ENCODE measurements at regions of chr2 and their contacts with region 1.

Region 1: DNA sequence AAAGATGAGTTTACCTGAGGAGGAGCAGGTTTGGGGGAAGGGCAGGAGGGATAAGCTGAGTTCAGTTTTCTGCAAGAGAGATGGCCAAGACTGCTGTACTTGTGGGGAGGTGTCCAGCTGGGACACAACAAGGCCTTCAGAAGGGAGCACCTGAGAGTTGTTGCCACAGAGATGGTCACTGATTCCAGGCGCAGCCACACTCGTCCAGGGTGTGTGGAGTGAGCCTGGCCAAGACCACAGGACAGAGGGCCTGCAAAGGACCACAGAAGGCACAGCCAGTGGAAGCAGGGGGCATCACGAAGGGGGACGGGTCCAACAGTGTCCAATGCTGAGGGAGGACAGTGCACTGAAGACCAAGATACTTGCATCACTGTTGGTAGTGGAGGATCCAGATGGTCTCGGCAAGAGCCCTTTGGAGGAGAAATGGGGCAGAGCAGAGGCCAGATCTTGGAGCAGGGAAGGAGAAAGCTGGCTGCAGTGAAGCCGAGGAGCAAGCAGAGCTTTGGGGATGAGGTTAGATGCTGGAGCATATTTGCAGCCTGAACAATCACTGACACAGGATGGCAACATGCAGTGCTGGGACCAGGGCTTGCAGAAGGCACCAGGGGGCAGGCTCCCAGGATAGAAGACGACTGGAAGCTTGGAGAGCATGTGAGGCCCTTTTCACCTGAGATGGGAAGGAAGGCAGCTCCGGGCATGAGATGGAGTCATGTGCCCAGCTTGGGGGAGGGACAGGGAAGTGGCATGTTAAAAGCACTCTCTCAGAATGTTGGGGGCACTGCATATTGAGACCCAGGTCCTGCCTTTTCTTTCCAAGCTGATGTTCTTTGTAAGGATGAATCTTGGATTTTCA is 214.0 kb downstream of the CYP26B1 start:
- DNase-seq: no peak
- ATAC-seq: no peak

Region 2: GRCh38 chr2:70181363-70181956 is 1752.2 kb before region 1 on chr2:
- intact Hi-C with region 1: no loop called
- DNase-seq: no peak
- ATAC-seq: no peak

Region 3: GRCh38 chr2:72137498-72138010 is 203.9 kb after region 1 on chr2:
- intact Hi-C with region 1: loop called (anchors 10 kb)
- DNase-seq: peak; percentile 76
- ATAC-seq: peak; percentile 49

Measured in sciatic nerve (tissue), 2 donors.